Activated naive CD4-positive, alpha-beta T cell treated with anti-CD3 and anti-CD28 coated beads for 36 hours (primary cell): ENCODE measurements at regions of chr13 and their contacts with region 1.

Region 1: GRCh38 chr13:25001476-25002206 is 94.3 kb upstream of the PABPC3 start:
- DNase-seq: no peak
- H3K4me3 Mint-ChIP-seq: no peak overlapping the region
- H3K27ac Mint-ChIP-seq: no peak overlapping the region
- H3K4me1 Mint-ChIP-seq: no peaks in the 10 kb centered on the region
- H3K27me3 Mint-ChIP-seq: peaks cover 35% of the 10 kb centered on the region

Region 2: GRCh38 chr13:25037057-25037813 is 35.6 kb after region 1 on chr13:
- CTCF ChIA-PET with region 1: interaction called, 14 read pairs
- intact Hi-C with region 1: loop called (anchors 1 kb)
- DNase-seq: peak; percentile 69
- H3K4me3 Mint-ChIP-seq: no peak overlapping the region
- H3K27ac Mint-ChIP-seq: no peak overlapping the region
- H3K4me1 Mint-ChIP-seq: no peaks in the 10 kb centered on the region
- H3K27me3 Mint-ChIP-seq: peaks cover 33% of the 10 kb centered on the region

Region 3: DNA sequence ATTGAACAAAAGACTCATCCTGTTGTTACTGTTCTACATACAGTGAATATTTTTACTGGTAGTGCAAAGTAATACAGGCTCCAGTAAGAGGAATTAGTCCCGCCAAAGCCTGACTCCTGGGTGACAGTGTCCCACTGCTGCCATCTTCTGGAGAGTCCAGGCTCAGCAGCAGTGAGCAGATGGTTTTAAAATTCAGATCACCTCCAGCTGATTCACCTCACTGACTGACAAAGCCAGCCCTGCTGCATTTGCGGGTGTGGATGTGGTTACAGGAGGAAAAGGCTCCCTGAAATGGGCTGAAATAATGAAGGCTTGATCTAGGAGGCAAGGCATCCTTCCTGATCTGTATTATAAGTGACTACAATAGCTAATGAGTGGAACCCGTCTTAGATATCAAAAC is 112.6 kb after region 1 on chr13:
- CTCF ChIA-PET with region 1: interaction called, 23 read pairs
- intact Hi-C with region 1: loop called (anchors 1 kb)
- DNase-seq: peak; percentile 81
- H3K4me3 Mint-ChIP-seq: no peak overlapping the region
- H3K27ac Mint-ChIP-seq: no peak overlapping the region
- H3K4me1 Mint-ChIP-seq: peaks cover 3% of the 10 kb centered on the region
- H3K27me3 Mint-ChIP-seq: peaks cover 33% of the 10 kb centered on the region

Region 4: GRCh38 chr13:25281193-25281934 is 279.7 kb after region 1 on chr13:
- CTCF ChIA-PET with region 1: no interaction called
- intact Hi-C with region 1: no loop called
- DNase-seq: peak; percentile 65
- H3K4me3 Mint-ChIP-seq: peak overlapping the region; percentile 34
- H3K27ac Mint-ChIP-seq: peak overlapping the region; percentile 78
- H3K4me1 Mint-ChIP-seq: peaks cover 82% of the 10 kb centered on the region
- H3K27me3 Mint-ChIP-seq: no peaks in the 10 kb centered on the region

Region 5: GRCh38 chr13:26074706-26075105 is 1073.1 kb after region 1 on chr13:
- CTCF ChIA-PET with region 1: no interaction called
- intact Hi-C with region 1: loop called (anchors 5 kb)
- DNase-seq: no peak
- H3K4me3 Mint-ChIP-seq: no peak overlapping the region
- H3K27ac Mint-ChIP-seq: no peak overlapping the region
- H3K4me1 Mint-ChIP-seq: no peaks in the 10 kb centered on the region
- H3K27me3 Mint-ChIP-seq: peaks cover 22% of the 10 kb centered on the region